Activated T-helper 1 cell treated with anti-CD3 and anti-CD28 coated beads, Interleukin-12 subunit alpha, Interleukin-12 subunit beta, Interleukin-2, Interleukin-4 antibody, amounts not matched to agents 30 ng/mL and 10 ng/mL and 1 ng/mL, durations not matched to agents 14 hours and 24 hours and 36 hours (primary cell): ENCODE measurements at regions of chr1 and their contacts with region 1.

Region 1: DNA sequence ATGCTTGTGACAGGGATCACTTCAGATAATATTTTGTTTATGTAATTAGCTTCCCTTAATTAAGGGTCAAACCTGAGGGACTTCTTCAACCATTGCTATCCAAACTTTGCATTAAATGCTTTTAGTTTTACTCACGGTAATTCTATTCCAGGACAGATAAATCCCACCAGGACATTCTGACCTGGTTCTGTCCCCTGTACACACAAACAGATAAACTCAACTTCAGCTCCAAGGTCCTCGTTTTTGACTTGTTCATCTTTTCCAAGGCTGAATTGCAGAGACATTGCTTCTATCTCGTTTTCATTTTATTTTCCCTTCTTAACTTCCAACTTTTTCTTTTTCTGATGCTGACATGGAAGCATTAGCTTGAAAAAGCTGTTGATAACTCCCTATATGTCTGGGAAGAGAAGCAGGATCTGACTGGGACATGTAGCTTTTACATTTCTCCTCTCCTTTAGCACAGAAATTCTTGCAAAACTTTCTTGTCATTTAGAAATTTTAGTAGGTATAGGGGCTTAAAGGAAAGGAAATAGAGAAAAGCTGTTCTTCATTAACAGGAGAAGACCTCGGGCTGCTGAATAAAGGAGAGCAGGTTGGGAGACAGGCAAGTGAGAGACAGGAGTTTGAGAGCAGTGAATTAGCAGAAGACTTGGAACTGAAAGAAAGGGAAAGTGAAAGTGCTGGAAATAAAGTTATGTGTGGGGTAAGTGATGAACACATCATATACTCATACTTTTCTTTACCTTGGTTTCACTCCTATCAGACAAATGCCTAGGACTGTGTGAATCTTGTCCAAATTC is 231.7 kb upstream of the B3GALT2 start:
- DNase-seq: no peak
- H3K4me3 Mint-ChIP-seq: peak overlapping the region; percentile 36
- H3K27ac Mint-ChIP-seq: peak overlapping the region; percentile 40
- H3K4me1 Mint-ChIP-seq: peaks cover 56% of the 10 kb centered on the region
- H3K27me3 Mint-ChIP-seq: peaks cover 5% of the 10 kb centered on the region

Region 2: DNA sequence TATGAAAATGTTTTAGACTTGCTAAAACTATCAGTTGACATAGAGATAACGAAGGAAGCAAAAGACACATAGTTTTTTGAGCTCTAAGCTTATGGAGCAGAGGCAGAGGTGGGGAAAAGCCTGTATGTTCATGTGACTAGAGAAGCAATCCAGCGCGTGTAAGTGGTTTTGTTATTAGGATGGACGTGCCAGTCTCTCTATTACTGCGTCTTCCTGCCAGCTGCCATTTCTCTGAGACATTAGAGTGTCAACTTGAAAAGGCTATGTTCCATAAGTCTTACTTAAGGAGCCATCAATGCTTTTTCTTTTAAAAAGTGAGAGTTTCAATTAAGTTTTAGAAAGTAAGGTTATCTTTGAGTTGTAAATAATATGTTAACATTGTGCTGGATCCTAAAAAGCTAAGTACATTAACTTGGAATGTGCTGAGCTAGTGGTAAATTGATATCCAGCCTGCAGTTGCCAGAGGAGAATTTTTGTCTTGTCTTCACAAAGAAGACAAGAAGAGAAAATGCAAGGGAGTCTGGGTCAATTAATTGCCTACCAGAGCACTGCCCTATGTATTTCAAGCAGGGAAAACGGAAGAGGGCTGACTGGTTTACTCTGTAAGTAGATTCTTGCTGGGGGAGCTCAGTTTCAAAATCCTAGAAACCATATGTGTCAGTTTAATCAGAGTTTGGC is 69.9 kb before region 1 on chr1:
- intact Hi-C with region 1: no loop called
- DNase-seq: no peak
- H3K4me3 Mint-ChIP-seq: no peak overlapping the region
- H3K27ac Mint-ChIP-seq: no peak overlapping the region
- H3K4me1 Mint-ChIP-seq: no peaks in the 10 kb centered on the region
- H3K27me3 Mint-ChIP-seq: peaks cover 2% of the 10 kb centered on the region

Region 3: GRCh38 chr1:193437785-193438184 is 19.6 kb after region 1 on chr1:
- intact Hi-C with region 1: loop called (anchors 2 kb)
- DNase-seq: peak; percentile 32
- H3K4me3 Mint-ChIP-seq: peak overlapping the region; percentile 48
- H3K27ac Mint-ChIP-seq: peak overlapping the region; percentile 70
- H3K4me1 Mint-ChIP-seq: peaks cover 57% of the 10 kb centered on the region
- H3K27me3 Mint-ChIP-seq: no peaks in the 10 kb centered on the region

Region 4: GRCh38 chr1:193479187-193479586 is 61.0 kb after region 1 on chr1:
- intact Hi-C with region 1: loop called (anchors 1 kb)
- DNase-seq: peak; percentile 84
- H3K4me3 Mint-ChIP-seq: peak overlapping the region; percentile 30
- H3K27ac Mint-ChIP-seq: peak overlapping the region; percentile 86
- H3K4me1 Mint-ChIP-seq: peaks cover 78% of the 10 kb centered on the region
- H3K27me3 Mint-ChIP-seq: no peaks in the 10 kb centered on the region

Region 5: DNA sequence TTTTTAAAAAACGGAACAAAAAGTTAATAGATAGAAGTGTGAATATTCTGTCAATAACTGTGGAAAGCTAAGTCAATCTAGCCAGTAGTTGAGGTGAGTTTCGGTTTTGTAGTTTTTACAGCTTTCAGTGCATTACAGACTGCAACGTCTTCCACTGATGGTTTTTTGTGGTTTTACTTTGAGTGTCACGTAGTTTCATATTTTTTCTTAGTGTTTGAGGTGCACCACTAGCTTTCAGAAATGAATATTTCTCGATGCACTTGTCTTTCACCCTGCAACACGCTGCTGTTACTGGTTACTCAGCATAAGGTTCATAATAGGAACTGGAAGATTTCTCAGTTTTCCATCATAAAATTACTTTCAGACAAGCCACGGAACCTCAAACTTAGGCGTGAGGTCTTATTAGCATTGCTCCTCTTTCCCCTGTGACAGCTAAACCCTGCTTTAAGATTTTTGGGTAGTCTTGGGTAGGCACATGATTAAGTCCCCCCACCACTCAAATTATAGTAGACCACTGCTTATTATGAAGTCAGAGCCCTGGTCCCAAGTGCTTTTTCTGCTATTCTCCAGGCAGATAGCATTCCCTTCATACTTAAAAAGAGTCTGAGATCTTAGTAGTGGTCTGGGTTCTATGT is 1777.4 kb after region 1 on chr1:
- intact Hi-C with region 1: loop called (anchors 5 kb)
- DNase-seq: peak; percentile 9
- H3K4me3 Mint-ChIP-seq: no peak overlapping the region
- H3K27ac Mint-ChIP-seq: peak overlapping the region; percentile 18
- H3K4me1 Mint-ChIP-seq: peaks cover 15% of the 10 kb centered on the region
- H3K27me3 Mint-ChIP-seq: peaks cover 3% of the 10 kb centered on the region